A673 (cell line): ENCODE measurements at regions of chr1 and their contacts with region 1.

Region 1: GRCh38 chr1:159030877-159031447 is 21.3 kb downstream of the IFI16 start:
- DNase-seq: no peak
- H3K4me3 ChIP-seq: no peak overlapping the region
- H3K27ac ChIP-seq: no peak overlapping the region
- H3K4me1 ChIP-seq: peaks cover 4% of the 10 kb centered on the region
- H3K27me3 ChIP-seq: no peaks in the 10 kb centered on the region
- CTCF ChIP-seq: no peak

Region 2: DNA sequence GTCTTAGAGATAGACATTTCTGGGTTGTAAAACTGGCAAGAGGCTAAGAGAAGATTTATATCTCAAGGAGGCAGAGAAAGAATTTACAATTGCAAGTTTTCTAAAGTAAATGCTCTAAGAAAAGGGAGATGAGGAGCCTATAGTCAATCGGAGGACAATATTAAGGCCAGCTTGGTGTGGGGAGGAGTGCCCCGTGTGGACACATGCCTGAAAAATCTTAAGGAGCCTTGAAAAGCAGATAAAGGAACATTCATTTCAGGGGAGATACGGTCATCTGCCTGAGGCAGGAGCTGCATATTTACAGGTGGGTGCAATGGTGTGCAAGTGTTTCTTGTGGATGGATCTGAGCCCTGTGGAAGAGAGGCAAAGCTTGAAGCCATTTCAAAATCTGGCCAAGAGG is 1279.7 kb before region 1 on chr1:
- CTCF ChIA-PET with region 1: no interaction called
- POLR2A ChIA-PET with region 1: no interaction called
- intact Hi-C with region 1: no loop called
- DNase-seq: no peak
- H3K4me3 ChIP-seq: no peak overlapping the region
- H3K27ac ChIP-seq: no peak overlapping the region
- H3K4me1 ChIP-seq: no peaks in the 10 kb centered on the region
- H3K27me3 ChIP-seq: no peaks in the 10 kb centered on the region
- CTCF ChIP-seq: 0 out of 2 replicates have a peak, but pooled peaks have one; percentile 22

Region 3: GRCh38 chr1:159040893-159041724 is 10.1 kb after region 1 on chr1:
- CTCF ChIA-PET with region 1: no interaction called
- POLR2A ChIA-PET with region 1: no interaction called
- intact Hi-C with region 1: no loop called
- DNase-seq: no peak
- H3K4me3 ChIP-seq: no peak overlapping the region
- H3K27ac ChIP-seq: no peak overlapping the region
- H3K4me1 ChIP-seq: no peaks in the 10 kb centered on the region
- H3K27me3 ChIP-seq: no peaks in the 10 kb centered on the region
- CTCF ChIP-seq: no peak

Region 4: GRCh38 chr1:159056069-159056698 is 25.2 kb after region 1 on chr1:
- CTCF ChIA-PET with region 1: no interaction called
- POLR2A ChIA-PET with region 1: interaction called, 13 read pairs
- intact Hi-C with region 1: no loop called
- DNase-seq: peak; percentile 31
- H3K4me3 ChIP-seq: no peak overlapping the region
- H3K27ac ChIP-seq: no peak overlapping the region
- H3K4me1 ChIP-seq: peaks cover 28% of the 10 kb centered on the region
- H3K27me3 ChIP-seq: peaks cover 22% of the 10 kb centered on the region
- CTCF ChIP-seq: peak; percentile 51

Region 5: DNA sequence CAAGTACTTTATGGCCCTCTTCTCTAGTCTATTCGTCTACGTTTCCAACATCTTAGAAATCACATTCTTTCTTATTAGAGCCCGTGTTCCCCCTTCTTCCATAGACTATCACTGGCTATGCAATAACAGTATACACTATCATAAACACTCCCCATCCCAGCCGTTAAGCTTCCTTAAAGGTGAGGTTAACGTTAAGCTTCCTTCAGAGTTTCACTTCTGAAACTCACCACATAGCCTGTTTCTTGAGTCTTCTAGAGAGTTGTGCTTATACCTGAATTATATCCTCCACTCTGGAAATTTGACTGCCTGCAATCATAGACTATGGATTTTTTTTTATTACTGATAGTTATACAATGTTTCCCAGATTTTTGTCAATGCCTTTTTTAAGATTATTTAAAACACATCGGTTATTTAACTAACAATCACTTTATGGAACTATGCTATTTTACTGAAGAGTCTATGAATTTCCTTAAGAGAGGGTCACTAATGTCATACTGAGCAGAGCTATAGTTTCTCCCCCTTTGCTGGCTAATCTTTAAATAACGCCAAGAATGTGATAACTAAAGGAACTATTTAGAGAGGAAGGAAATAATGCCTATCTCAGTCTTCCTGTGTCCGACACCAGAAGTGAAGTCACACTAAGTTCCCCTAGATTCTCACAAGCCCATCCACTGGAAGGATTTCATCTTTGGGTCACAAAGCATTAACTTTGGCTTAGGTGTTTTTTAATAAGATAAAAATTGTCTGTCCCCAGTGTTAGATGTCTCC is 288.0 kb after region 1 on chr1:
- CTCF ChIA-PET with region 1: no interaction called
- POLR2A ChIA-PET with region 1: no interaction called
- intact Hi-C with region 1: no loop called
- DNase-seq: no peak
- H3K4me3 ChIP-seq: no peak overlapping the region
- H3K27ac ChIP-seq: no peak overlapping the region
- H3K4me1 ChIP-seq: no peaks in the 10 kb centered on the region
- H3K27me3 ChIP-seq: peaks cover 17% of the 10 kb centered on the region
- CTCF ChIP-seq: no peak